BJ (cell line): ENCODE measurements at regions of chr6 and their contacts with region 1.

Region 1: DNA sequence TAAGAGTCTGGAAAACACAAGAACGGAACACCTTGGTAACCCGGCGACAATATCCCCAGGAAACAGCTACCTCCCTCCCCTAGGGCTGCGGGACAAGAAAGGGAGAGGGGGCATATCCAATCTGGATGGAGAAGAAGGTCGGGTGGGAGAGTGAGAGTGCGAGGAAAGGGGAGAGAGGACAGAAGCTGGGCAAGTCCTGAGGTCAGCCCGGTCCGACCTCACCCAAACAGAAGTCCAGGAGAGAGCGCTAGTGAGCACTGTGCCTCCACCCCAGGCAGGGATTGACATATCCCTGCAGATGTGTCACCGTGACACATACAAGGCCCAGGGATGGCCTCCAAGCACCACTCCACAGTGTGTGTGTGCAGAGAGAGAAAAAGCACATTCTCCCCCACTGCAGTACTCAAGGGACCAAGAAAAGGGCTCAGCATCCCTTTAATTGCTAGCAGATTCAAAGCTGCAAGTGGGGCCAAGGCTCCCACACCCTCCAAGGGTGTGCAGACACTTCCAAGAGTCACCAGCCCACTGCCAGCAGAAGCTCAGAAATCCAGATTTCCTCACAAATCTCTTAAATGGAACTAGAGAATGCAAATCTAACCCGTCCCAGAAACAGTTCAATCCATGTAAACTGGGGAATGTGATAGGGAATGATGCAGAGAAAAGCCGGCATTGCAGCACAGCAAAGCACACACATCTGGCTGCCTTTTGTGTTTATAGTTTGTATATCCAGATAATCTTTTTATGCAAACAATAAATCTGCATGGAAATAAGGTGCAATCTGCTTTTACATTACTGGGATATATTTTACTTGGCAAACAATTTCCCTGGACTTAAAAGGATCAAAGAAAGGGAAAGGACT is 3.1 kb downstream of the PXDC1 start:
- DNase-seq: peak; percentile 24
- H3K4me3 ChIP-seq: peak overlapping the region; percentile 65
- H3K27me3 ChIP-seq: no peaks in the 10 kb centered on the region
- CTCF ChIP-seq: peak; percentile 82

Region 2: DNA sequence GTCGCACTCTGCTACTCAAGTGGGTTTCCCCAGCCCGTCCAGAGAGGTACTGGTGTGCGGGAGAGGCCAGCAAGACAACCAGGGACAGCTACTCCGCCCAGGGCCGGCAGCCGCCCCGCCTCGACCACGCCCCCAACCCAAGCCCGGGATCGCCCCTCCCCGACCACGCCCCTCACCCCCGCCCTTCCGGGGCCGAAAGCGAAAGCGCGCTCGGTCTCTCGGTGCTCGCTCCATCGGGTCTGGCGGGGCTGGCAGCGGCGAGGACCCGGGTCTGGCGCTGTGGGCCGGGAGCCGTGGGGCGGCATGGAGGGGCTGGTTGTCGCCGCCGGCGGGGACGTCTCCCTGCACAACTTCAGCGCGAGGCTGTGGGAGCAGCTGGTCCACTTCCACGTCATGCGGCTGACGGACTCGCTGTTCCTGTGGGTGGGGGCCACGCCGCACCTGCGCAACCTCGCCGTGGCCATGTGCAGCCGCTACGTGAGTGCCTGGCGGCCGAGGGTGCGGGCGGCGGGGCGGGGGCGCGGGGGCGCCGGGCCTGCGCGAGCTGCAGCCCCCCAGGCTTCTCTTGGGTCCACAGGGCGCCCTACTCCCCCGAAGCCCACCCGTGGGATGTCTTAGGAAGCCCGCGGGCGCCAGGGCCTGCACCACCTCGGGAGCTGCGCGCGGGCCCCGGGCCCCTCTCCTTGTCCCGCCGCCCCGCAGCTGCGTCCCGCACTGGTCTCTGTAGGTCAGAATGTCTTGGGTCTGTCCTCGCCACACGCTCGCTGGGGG is 489.5 kb before region 1 on chr6 and contains the start of gene PSMG4:
- CTCF ChIA-PET with region 1: no interaction called
- POLR2A ChIA-PET with region 1: no interaction called
- DNase-seq: peak; percentile 27
- H3K4me3 ChIP-seq: peak within 1 kb of the TSS; percentile 79
- H3K27me3 ChIP-seq: no peaks in the 10 kb centered on the region
- CTCF ChIP-seq: no peak
- polyA plus RNA-seq, gene PSMG4: 24.2 and 24.7 TPM in 2 replicates

Region 3: GRCh38 chr6:3687847-3688246 is 60.6 kb before region 1 on chr6:
- CTCF ChIA-PET with region 1: no interaction called
- POLR2A ChIA-PET with region 1: no interaction called
- DNase-seq: no peak
- H3K4me3 ChIP-seq: no peak overlapping the region
- H3K27me3 ChIP-seq: no peaks in the 10 kb centered on the region
- CTCF ChIP-seq: no peak

Region 4: DNA sequence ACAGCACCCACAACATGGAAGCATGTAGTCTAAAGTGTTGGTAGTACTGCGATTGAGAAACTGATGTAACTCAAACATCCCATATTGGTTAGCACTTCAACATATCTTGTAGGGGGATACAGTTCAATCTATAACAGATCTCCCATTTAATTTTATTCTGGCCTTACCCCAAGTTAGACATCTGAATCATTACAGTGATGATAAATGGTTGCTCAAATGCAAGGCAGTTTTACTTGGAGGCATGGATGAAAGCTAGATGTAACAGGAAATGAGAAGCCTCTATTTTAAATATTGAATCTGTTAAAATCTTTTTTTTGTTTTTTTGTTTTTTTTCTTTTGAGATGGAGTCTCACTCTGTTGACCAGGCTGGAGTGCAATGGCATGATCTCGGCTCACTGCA is 56.5 kb after region 1 on chr6:
- CTCF ChIA-PET with region 1: interaction called, 6 read pairs
- POLR2A ChIA-PET with region 1: interaction called, 10 read pairs
- DNase-seq: no peak
- H3K4me3 ChIP-seq: no peak overlapping the region
- H3K27me3 ChIP-seq: no peaks in the 10 kb centered on the region
- CTCF ChIP-seq: no peak

Region 5: DNA sequence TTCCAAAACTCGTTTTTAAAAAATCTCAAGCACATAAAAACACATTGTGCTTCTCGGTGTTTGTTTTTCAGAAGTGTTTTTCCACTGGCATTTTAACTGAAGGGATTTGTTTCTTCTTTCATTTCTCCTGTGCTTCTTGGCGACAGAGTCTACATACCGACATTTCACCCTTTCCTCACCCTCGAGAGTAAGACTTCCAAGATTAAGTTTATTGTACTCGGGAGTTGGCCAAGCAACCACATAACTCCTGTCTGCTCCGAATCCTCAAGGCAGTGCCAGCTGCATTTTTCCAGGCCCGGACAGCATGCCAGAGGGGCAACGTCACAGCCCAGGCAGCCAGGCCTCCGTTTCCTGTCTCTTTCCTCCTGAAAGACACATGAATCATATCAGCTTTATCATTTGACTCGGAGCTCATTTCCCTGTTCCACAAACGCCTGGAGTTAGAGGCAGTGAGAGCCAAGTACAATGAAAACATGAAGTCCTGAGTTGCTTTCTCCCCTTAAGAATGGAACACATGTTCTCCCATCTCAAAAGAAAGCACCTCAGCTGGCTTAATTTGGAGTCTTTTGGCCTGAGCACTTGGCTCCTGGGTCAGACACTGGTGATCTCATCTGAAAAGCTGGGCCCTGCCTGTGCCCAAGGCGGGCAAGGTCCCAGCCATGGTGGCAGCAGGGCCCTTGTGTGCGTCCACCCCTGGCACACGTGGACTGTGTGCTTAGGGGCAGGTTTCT is 77.6 kb after region 1 on chr6:
- CTCF ChIA-PET with region 1: interaction called, 15 read pairs
- POLR2A ChIA-PET with region 1: interaction called, 4 read pairs
- DNase-seq: peak; percentile 97
- H3K4me3 ChIP-seq: no peak overlapping the region
- H3K27me3 ChIP-seq: no peaks in the 10 kb centered on the region
- CTCF ChIP-seq: no peak

Region 6: DNA sequence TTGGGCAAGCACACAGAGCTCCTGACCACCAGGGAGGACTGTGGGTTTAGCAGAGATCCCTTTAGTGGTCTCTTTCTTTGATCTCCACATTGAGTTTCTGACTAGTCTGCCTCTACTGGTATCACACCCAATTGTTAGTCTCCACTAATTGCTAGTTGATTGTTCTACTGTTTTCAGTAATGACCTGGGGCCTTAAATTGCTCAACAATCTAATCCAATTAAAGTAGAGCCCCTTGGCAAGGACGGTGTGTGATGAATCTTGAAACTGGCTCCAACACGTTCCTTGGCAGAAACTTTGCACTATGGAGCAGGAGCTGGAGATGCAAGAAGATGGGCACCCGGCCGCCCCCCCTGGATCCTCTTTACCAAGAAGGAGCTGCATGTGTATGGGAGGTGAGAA is 113.0 kb after region 1 on chr6:
- CTCF ChIA-PET with region 1: no interaction called
- POLR2A ChIA-PET with region 1: no interaction called
- DNase-seq: no peak
- H3K4me3 ChIP-seq: no peak overlapping the region
- H3K27me3 ChIP-seq: no peaks in the 10 kb centered on the region
- CTCF ChIP-seq: no peak

Region 7: GRCh38 chr6:3887150-3887700 is 138.8 kb after region 1 on chr6:
- CTCF ChIA-PET with region 1: interaction called, 78 read pairs
- POLR2A ChIA-PET with region 1: interaction called, 7 read pairs
- DNase-seq: no peak
- H3K4me3 ChIP-seq: no peak overlapping the region
- H3K27me3 ChIP-seq: no peaks in the 10 kb centered on the region
- CTCF ChIP-seq: peak; percentile 63

Region 8: GRCh38 chr6:3929281-3929798 is 180.9 kb after region 1 on chr6:
- CTCF ChIA-PET with region 1: interaction called, 25 read pairs
- POLR2A ChIA-PET with region 1: no interaction called
- DNase-seq: peak; percentile 97
- H3K4me3 ChIP-seq: no peak overlapping the region
- H3K27me3 ChIP-seq: no peaks in the 10 kb centered on the region
- CTCF ChIP-seq: no peak

Region 9: DNA sequence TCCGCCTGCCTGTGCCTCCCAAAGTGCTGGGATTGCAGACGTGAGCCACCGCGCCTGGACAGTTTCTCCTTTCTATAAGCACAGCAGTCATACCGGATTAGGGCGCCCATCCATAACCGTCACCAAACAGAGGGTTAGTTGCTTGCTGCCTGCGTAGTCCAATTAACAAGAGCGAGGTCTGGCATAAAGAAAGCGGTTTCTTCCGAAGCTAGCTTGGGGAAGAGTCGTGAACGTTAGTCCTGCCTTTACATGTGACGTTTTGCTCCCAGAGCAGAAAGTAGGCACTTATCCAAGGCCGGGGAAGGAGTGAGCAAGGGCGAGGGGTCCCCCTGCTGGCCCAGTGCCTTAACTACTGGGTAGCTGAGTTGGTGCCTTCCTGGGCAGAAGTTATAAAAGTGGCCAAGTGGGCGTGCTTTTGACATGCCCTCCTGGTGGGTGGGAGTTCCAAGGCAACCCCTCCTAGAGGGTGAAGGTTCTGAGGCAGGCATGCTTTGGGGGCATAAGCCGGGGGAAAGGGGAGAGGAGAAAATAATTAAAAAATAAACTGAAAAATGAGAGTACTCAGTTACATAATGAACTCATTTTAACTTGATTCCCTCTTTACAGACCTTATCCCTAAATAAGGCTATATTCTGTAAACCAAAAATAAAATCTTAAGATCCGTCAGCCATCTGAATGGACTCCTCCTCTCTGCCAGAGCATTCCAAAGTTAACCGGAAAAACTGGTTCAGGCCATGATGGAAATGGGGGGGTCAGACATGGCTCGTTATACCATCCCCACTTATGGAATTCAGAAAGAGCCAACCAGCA is 242.5 kb after region 1 on chr6:
- CTCF ChIA-PET with region 1: interaction called, 10 read pairs
- POLR2A ChIA-PET with region 1: no interaction called
- DNase-seq: peak; percentile 27
- H3K4me3 ChIP-seq: peak overlapping the region; percentile 9; the same call in 1 of the 2 replicates
- H3K27me3 ChIP-seq: no peaks in the 10 kb centered on the region
- CTCF ChIP-seq: peak; percentile 95